SK-N-SH (cell line): ENCODE measurements at regions of chr17 and their contacts with region 1.

Region 1: DNA sequence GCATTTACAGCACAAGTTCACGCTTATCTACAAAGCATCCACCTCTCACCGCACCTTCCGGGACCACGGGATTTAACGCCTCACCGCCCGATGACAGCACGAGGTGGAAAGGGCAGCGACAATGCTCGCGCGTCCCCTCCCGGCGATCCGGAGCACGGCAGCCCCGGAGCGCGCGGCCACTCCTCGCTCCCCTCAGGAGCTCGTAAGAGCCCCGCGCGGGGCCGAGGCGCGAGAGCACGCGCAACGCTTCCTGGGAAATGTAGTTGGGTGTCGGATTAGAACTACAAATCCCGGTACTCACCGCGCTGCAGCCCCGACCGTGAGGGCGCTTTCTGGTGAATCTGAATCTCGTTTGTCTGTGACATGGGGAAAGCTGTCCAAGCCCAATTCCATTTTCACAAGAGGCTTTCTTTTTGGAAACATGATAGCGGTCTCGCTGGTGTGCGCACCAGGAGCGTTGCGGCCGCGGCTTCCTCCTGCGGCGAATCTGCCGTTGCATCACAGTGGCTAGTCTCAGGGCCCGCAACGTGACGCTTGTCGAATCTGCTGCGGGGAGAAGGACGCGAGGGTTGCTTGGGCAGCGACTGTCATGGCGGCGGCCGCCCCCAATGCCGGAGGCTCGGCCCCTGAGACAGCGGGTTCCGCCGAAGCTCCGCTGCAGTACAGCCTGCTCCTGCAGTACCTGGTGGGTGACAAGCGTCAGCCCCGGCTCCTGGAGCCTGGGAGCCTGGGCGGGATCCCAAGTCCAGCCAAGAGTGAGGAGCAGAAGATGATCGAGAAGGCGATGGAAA is at the start of gene TIMM22:
- DNase-seq: peak; percentile 96
- H3K4me3 ChIP-seq: peak within 1 kb of the TSS; percentile 68 to 99
- H3K27ac ChIP-seq: peak within 1 kb of the TSS; percentile 87 to 92
- H3K4me1 ChIP-seq: peaks cover 12 to 15% of the 10 kb centered on the region in 2 experiments; a peak in 3 of 4 replicates
- H3K27me3 ChIP-seq: no peaks in the 10 kb centered on the region
- CTCF ChIP-seq: peak; percentile 88
- EP300 ChIP-seq: peak; percentile 88 to 95
- RAD21 ChIP-seq: peak; percentile 77
- polyA plus RNA-seq, gene TIMM22: 9.9 and 10.7 TPM in 2 replicates

Region 2: DNA sequence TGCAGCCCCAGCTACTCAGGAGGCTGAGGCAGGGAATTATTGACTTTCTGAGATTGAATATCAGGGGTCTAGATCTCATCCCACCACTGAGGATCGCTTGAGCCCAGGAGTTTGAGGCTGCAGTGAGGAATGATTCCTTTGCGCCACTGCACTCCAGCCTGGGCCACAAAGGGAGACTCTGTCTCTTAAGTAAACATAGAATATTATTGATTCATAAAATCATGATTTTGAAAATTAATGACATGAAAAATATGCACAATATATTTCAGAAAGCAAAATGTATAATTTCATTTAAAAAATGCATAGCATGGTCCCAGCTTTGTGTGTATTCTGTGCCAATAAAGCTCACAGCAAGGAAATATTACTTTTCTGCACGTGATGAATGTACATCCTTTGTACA is 280.5 kb before region 1 on chr17:
- CTCF ChIA-PET with region 1: interaction called, 11 read pairs
- POLR2A ChIA-PET with region 1: no interaction called
- DNase-seq: no peak
- H3K4me3 ChIP-seq: no peak overlapping the region
- H3K27ac ChIP-seq: no peak overlapping the region
- H3K4me1 ChIP-seq: peaks cover 5 to 7% of the 10 kb centered on the region in 2 experiments; a peak in 2 of 4 replicates
- H3K27me3 ChIP-seq: no peaks in the 10 kb centered on the region
- CTCF ChIP-seq: no peak
- EP300 ChIP-seq: no peak
- RAD21 ChIP-seq: no peak

Region 3: DNA sequence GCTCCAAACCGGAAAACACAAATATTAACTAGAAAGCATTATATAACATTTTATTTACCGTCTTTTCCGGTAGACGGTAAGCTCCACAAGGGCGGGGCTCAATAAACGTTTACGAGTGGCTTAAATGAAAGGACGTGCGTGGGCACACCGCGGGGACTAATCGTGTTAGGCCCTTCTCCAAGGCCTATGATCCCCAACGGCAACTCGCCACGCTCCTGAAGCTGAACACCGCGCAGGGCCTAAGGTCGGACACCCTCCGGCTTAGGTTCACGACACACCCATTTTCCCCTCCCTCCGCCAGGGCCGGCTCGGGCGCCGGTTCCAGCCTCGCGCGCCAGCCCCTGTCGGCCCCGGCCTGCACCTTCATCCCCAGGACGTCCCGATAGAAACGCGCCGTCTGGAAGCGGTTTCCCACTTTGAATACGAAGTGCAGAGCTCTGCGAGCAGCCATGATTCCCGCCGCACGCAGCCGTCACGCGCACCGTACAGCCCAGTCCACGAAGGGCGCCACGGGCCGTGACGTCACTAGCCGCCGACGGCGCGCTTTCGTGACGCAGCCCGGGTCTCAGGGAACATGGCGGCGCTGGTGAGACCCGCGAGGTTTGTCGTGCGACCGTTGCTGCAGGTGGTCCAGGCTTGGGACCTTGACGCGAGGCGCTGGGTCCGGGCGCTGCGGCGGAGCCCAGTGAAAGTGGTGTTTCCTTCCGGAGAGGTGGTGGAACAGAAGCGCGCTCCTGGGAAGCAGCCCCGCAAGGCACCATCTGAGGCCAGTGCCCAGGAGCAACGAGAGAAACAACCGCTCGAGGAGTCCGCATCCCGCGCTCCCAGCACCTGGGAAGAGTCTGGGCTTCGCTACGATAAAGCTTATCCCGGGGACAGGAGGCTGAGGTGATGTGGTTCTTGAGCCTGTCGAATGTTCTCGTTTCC is 214.7 kb before region 1 on chr17 and contains the starts of genes GLOD4 and MRM3:
- CTCF ChIA-PET with region 1: interaction called, 14 read pairs
- POLR2A ChIA-PET with region 1: no interaction called
- DNase-seq: peak; percentile 97
- H3K4me3 ChIP-seq: peak within 1 kb of the TSS; percentile 98 to 99
- H3K27ac ChIP-seq: peak within 1 kb of the TSS; percentile 56 to 77
- H3K4me1 ChIP-seq: peaks cover 9 to 15% of the 10 kb centered on the region in 2 experiments
- H3K27me3 ChIP-seq: no peaks in the 10 kb centered on the region
- CTCF ChIP-seq: no peak; the same call in 1 of the 2 replicates
- EP300 ChIP-seq: no peak
- RAD21 ChIP-seq: no peak
- polyA plus RNA-seq, gene GLOD4: 34.3 and 40.0 TPM in 2 replicates
- polyA plus RNA-seq, gene MRM3: 16.4 and 17.4 TPM in 2 replicates

Region 4: DNA sequence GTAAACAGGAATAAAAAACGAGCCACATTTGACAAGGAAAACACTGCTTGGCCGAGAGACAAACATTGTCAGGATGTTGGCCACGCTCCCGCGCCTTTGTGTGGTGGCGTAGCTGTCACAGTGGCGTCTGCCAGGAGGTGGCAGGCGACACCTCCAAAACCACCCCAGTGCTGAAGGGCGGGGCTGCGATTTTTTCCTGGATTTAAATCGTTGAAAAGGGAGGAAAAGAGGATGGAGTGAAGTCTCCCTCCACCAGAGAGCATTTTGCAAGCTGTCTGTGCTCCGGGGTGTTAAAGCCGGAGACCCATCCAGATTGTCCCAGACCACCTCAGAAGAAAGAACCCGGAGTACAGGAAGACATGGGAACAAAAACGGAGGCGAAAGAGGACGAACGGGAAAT is 201.9 kb before region 1 on chr17:
- CTCF ChIA-PET with region 1: interaction called, 69 read pairs
- POLR2A ChIA-PET with region 1: no interaction called
- DNase-seq: peak; percentile 90
- H3K4me3 ChIP-seq: peak overlapping the region in 1 of 2 experiments; percentile 9; a peak in 1 of 4 replicates
- H3K27ac ChIP-seq: peak overlapping the region in 1 of 2 experiments; percentile 7; a peak in 1 of 4 replicates
- H3K4me1 ChIP-seq: peaks cover 0 to 13% of the 10 kb centered on the region in 2 experiments; a peak in 1 of 4 replicates
- H3K27me3 ChIP-seq: no peaks in the 10 kb centered on the region
- CTCF ChIP-seq: peak; percentile 72
- EP300 ChIP-seq: no peak
- RAD21 ChIP-seq: peak; percentile 84